Transverse colon (tissue), 4 donors: ENCODE measurements at regions of chr12 and their contacts with region 1.

Region 1: DNA sequence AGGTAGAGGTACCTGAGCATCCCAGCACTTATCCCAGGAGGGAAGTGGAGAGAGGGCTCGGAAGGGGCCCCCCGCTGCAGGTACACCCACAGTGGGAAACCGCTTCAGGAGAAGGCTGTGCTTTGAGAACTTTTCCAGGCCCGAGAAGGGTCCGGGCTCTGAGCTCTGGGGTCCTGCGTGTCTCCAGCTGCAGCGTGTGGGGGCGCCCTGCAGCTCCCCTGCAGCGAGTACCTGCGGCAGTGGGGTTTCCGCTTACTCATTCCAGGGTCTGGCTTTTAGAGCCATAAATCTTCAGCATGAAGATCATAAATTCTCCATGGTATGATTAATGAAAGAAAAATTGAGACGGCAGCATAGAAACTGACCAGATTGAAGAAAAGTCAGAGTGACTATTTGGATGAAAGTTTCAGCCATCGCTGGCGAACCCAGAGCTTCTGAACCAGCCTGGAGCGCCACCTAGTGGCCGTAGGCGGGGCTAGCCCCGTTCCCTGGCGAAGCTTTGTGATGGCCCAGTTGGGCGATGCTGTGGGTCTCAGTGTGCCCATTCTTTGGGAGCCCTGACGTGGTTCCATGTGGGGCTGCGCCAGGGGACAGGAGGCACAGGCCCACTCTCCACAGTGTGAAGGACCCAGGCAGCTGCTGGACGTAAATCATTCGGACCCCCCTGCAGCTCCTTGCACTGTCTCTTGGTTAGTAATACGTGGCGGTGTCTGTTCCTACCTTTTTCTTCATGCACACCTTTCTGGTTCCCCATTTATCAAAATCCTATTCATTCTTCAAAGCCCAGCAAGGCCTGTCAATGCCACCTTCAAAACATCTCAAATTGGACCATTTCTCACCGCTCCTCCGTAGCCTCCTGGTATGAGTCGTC is 198.2 kb downstream of the TSPAN9 start:
- DNase-seq: peak; percentile 71
- H3K4me3 ChIP-seq: no peak overlapping the region
- H3K27ac ChIP-seq: no peak overlapping the region
- H3K4me1 ChIP-seq: peaks cover 0 to 4% (median 2%) of the 10 kb centered on the region in 4 donors
- H3K27me3 ChIP-seq: no peaks in the 10 kb centered on the region
- CTCF ChIP-seq: peak; percentile 87 to 98 (median 97)
- EP300 ChIP-seq: no peak
- POLR2A ChIP-seq: no peak

Region 2: GRCh38 chr12:3073438-3074250 is 201.8 kb before region 1 on chr12:
- in situ Hi-C with region 1: no loop called
- intact Hi-C with region 1: loop called (anchors 5 kb)
- DNase-seq: peak; percentile 88
- H3K4me3 ChIP-seq: no peak overlapping the region
- H3K27ac ChIP-seq: no peak overlapping the region
- H3K4me1 ChIP-seq: peaks cover 0 to 23% (median 8%) of the 10 kb centered on the region in 4 donors
- H3K27me3 ChIP-seq: no peaks in the 10 kb centered on the region
- CTCF ChIP-seq: peak; percentile 86 to 99 (median 98)
- EP300 ChIP-seq: no peak
- POLR2A ChIP-seq: no peak

Region 3: GRCh38 chr12:3135522-3136461 is 139.6 kb before region 1 on chr12:
- in situ Hi-C with region 1: loop called in 3 of 4 experiments (anchors 5 to 25 kb)
- intact Hi-C with region 1: loop called (anchors 2 kb)
- DNase-seq: peak; percentile 23
- H3K4me3 ChIP-seq: no peak overlapping the region
- H3K27ac ChIP-seq: no peak overlapping the region
- H3K4me1 ChIP-seq: peaks cover 5 to 17% (median 13%) of the 10 kb centered on the region in 4 donors
- H3K27me3 ChIP-seq: no peaks in the 10 kb centered on the region
- CTCF ChIP-seq: peak; percentile 72 to 80 (median 73)
- EP300 ChIP-seq: no peak
- POLR2A ChIP-seq: no peak

Region 4: DNA sequence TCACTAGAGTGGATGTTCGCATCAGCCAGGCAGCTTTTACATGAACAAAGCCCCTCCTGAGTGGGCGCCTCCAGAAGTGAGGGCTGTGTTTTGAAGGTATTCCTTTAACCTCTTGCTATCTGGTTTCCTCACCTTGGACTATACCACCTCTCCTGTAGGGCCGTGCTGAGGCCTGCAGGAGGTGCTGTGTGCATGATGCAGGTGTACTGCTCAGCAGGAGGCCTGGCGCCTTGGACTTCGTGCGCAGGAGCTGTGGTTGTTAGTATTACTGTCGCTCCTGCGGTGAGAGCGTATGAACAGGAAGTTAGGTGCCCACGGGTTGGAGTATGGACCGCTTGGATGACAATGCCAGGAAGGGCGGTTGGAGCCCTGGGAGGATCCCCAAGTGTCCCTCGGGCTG is 67.5 kb before region 1 on chr12:
- in situ Hi-C with region 1: no loop called
- intact Hi-C with region 1: no loop called
- DNase-seq: no peak
- H3K4me3 ChIP-seq: no peak overlapping the region
- H3K27ac ChIP-seq: no peak overlapping the region
- H3K4me1 ChIP-seq: no peaks in the 10 kb centered on the region
- H3K27me3 ChIP-seq: peaks cover 3% of the 10 kb centered on the region
- CTCF ChIP-seq: no peak
- EP300 ChIP-seq: no peak
- POLR2A ChIP-seq: no peak

Region 5: DNA sequence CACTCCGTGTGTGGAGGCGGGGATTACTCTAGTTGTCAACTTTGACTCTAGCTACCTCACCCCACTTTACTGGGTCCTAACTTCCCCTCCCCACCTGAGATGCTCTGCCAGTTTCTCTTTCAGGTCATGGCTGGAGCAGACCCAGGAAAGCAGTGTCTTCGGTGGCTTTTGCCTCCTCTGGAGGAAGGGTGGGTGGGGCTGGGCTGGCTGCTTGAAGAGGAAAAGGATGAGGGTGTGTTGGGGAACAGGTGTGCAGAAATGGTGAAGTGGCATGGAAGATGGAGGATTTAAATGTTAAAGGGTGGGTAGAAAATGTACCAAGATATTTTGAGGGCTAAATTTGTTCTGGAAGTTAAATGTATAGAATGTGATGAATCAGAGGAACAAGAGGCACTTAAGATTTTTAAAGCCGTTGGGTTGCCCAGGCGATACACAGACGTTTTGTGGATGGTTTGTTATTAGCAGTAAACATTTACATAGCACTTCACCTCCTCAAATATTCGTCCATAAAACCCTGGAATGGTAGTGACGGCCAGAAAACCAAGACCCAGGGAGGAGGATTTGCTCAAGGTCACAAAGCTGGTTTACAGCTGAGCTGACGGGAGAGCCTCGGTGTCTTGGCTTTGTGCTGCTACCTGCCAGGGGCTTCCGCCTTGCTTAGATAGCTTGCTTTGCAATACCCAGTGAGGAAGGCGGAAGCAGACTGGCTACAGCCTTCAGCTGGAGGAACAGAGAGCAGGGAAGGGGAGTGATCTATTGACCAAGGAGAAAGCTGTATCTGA is 143.4 kb after region 1 on chr12:
- in situ Hi-C with region 1: no loop called
- intact Hi-C with region 1: no loop called
- DNase-seq: peak; percentile 20
- H3K4me3 ChIP-seq: no peak overlapping the region
- H3K27ac ChIP-seq: no peak overlapping the region
- H3K4me1 ChIP-seq: peaks cover 0 to 3% (median 0%) of the 10 kb centered on the region in 4 donors
- H3K27me3 ChIP-seq: peaks cover 9% of the 10 kb centered on the region
- CTCF ChIP-seq: no peak
- EP300 ChIP-seq: no peak
- POLR2A ChIP-seq: no peak